ENCODE measurements at regions of chr10 and their contacts with region 1.

Region 1: GRCh38 chr10:110746254-110746826 is 102.2 kb downstream of the RBM20 start:
- DNase-seq: peak; percentile 27
- H3K4me3 Mint-ChIP-seq: no peak overlapping the region
- H3K27ac Mint-ChIP-seq: no peak overlapping the region
- H3K4me1 Mint-ChIP-seq: peaks cover 43% of the 10 kb centered on the region
- H3K27me3 Mint-ChIP-seq: no peaks in the 10 kb centered on the region

Region 2: DNA sequence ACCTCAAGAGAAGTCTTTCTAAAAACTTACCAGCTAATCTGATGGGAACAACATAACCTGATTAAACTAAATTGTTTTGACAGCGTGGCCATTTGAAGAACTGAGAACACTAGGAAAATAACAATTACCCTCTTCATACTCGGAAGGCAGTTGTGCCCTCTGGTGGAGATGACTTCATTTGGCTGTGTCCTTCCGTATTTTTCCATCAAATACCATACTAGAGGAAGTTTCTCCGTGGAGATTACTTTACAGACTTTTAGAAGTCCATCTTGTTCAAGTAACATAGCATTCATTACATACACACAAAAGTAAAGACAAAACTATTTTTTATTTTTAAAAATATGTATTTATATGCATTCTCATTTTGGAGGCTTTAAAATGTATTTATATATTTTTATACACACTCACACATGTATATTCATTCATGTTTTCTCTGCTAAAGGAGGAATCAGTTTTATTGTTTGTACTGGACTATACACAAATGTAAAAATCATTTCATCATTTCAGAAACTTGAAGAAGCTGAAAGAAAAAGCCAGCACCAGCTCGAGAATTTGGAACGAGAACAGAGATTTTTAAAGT is 466.8 kb before region 1 on chr10:
- intact Hi-C with region 1: no loop called
- DNase-seq: peak; percentile 17
- H3K4me3 Mint-ChIP-seq: no peak overlapping the region
- H3K27ac Mint-ChIP-seq: no peak overlapping the region
- H3K4me1 Mint-ChIP-seq: peaks cover 8% of the 10 kb centered on the region
- H3K27me3 Mint-ChIP-seq: peaks cover 31% of the 10 kb centered on the region

Region 3: GRCh38 chr10:110893559-110894179 is 147.3 kb after region 1 on chr10:
- intact Hi-C with region 1: loop called (anchors 1 kb)
- DNase-seq: no peak
- H3K4me3 Mint-ChIP-seq: no peak overlapping the region
- H3K27ac Mint-ChIP-seq: no peak overlapping the region
- H3K4me1 Mint-ChIP-seq: peaks cover 6% of the 10 kb centered on the region
- H3K27me3 Mint-ChIP-seq: no peaks in the 10 kb centered on the region

Measured in activated T-helper 2 cell treated with anti-CD3 and anti-CD28 coated beads, Interferon-gamma antibody, Interleukin-2, Interleukin-4, amounts not matched to agents 10 μg/mL and 5 μg/mL and 100 μg/mL, durations not matched to agents 14 hours and 24 hours and 36 hours (primary cell).